ENCODE measurements at regions of chr6 and their contacts with region 1.

Region 1: GRCh38 chr6:8556370-8557018 is 121.1 kb upstream of the SLC35B3 start:
- DNase-seq: peak; percentile 86
- H3K4me3 ChIP-seq: no peak overlapping the region
- H3K27ac ChIP-seq: no peak overlapping the region
- H3K4me1 ChIP-seq: peaks cover 8% of the 10 kb centered on the region
- H3K27me3 ChIP-seq: no peaks in the 10 kb centered on the region
- CTCF ChIP-seq: no peak

Region 2: GRCh38 chr6:8627085-8627861 is 70.8 kb after region 1 on chr6:
- CTCF ChIA-PET with region 1: no interaction called
- dilution Hi-C with region 1: no loop called
- in situ Hi-C with region 1: no loop called
- intact Hi-C with region 1: loop called (anchors 5 kb)
- DNase-seq: peak; percentile 97
- H3K4me3 ChIP-seq: peak overlapping the region in 1 of 3 experiments; percentile 28
- H3K27ac ChIP-seq: peak overlapping the region; percentile 94
- H3K4me1 ChIP-seq: peaks cover 22% of the 10 kb centered on the region
- H3K27me3 ChIP-seq: no peaks in the 10 kb centered on the region
- CTCF ChIP-seq: no peak

Measured in mammary epithelial cell (primary cell).